Naive thymus-derived CD4-positive, alpha-beta T cell (primary cell): ENCODE measurements at regions of chr6 and their contacts with region 1.

Region 1: GRCh38 chr6:26285143-26286134 is 79.6 kb upstream of the BTN3A2 start:
- DNase-seq: peak; percentile 72 to 97 (median 92)
- ATAC-seq: peak; percentile 91
- H3K4me3 ChIP-seq: peak overlapping the region; percentile 88
- H3K4me3 Mint-ChIP-seq: peak overlapping the region; percentile 86 to 96 (median 90)
- H3K27ac ChIP-seq: peak overlapping the region; percentile 91
- H3K27ac Mint-ChIP-seq: peak overlapping the region; percentile 91 to 100 (median 98)
- H3K4me1 ChIP-seq: peaks cover 0 to 8% of the 10 kb centered on the region in 2 donors
- H3K4me1 Mint-ChIP-seq: peaks cover 7 to 48% (median 33%) of the 10 kb centered on the region in 7 donors
- H3K27me3 ChIP-seq: no peaks in the 10 kb centered on the region
- H3K27me3 Mint-ChIP-seq: peaks cover 0 to 9% (median 5%) of the 10 kb centered on the region in 5 donors

Region 2: GRCh38 chr6:26122793-26123674 is 162.4 kb before region 1 on chr6:
- CTCF ChIA-PET with region 1: interaction called, 4 read pairs
- POLR2A ChIA-PET with region 1: interaction called, 52 read pairs
- intact Hi-C with region 1: loop called in 1 of 2 experiments (anchors 1 kb)
- DNase-seq: peak; percentile 68 to 99 (median 96)
- ATAC-seq: peak; percentile 78
- H3K4me3 ChIP-seq: peak overlapping the region; percentile 94
- H3K4me3 Mint-ChIP-seq: peak overlapping the region; percentile 92 to 100 (median 98)
- H3K27ac ChIP-seq: peak overlapping the region; percentile 86
- H3K27ac Mint-ChIP-seq: peak overlapping the region; percentile 97 to 100 (median 99)
- H3K4me1 ChIP-seq: peaks cover 18 to 23% of the 10 kb centered on the region in 2 donors
- H3K4me1 Mint-ChIP-seq: peaks cover 22 to 54% (median 30%) of the 10 kb centered on the region in 7 donors
- H3K27me3 ChIP-seq: no peaks in the 10 kb centered on the region
- H3K27me3 Mint-ChIP-seq: peaks cover 0 to 21% (median 0%) of the 10 kb centered on the region in 5 donors

Region 3: GRCh38 chr6:26216356-26216885 is 69.0 kb before region 1 on chr6:
- CTCF ChIA-PET with region 1: no interaction called
- POLR2A ChIA-PET with region 1: interaction called, 112 read pairs
- intact Hi-C with region 1: loop called (anchors 1 to 2 kb)
- DNase-seq: peak; percentile 56 to 97 (median 93)
- ATAC-seq: peak; percentile 86
- H3K4me3 ChIP-seq: peak overlapping the region; percentile 72
- H3K4me3 Mint-ChIP-seq: no peak overlapping the region
- H3K27ac ChIP-seq: peak overlapping the region; percentile 84
- H3K27ac Mint-ChIP-seq: no peak overlapping the region
- H3K4me1 ChIP-seq: peaks cover 12 to 18% of the 10 kb centered on the region in 2 donors
- H3K4me1 Mint-ChIP-seq: peaks cover 3 to 31% (median 10%) of the 10 kb centered on the region in 7 donors
- H3K27me3 ChIP-seq: no peaks in the 10 kb centered on the region
- H3K27me3 Mint-ChIP-seq: no peaks in the 10 kb centered on the region

Region 4: GRCh38 chr6:26270903-26271667 is 14.4 kb before region 1 on chr6:
- CTCF ChIA-PET with region 1: interaction called, 17 read pairs
- POLR2A ChIA-PET with region 1: interaction called, 362 read pairs
- intact Hi-C with region 1: loop called (anchors 1 kb)
- DNase-seq: peak; percentile 50 to 89 (median 85)
- ATAC-seq: peak; percentile 24
- H3K4me3 ChIP-seq: peak overlapping the region; percentile 83
- H3K4me3 Mint-ChIP-seq: no peak overlapping the region
- H3K27ac ChIP-seq: peak overlapping the region; percentile 82
- H3K27ac Mint-ChIP-seq: peak overlapping the region in 2 of 9 donors; percentile 10 to 91
- H3K4me1 ChIP-seq: peaks cover 6 to 27% of the 10 kb centered on the region in 2 donors
- H3K4me1 Mint-ChIP-seq: peaks cover 0 to 34% (median 15%) of the 10 kb centered on the region in 7 donors
- H3K27me3 ChIP-seq: no peaks in the 10 kb centered on the region
- H3K27me3 Mint-ChIP-seq: no peaks in the 10 kb centered on the region

Region 5: GRCh38 chr6:26363882-26364701 is 78.7 kb after region 1 on chr6:
- CTCF ChIA-PET with region 1: no interaction called
- POLR2A ChIA-PET with region 1: no interaction called
- intact Hi-C with region 1: loop called in 1 of 2 experiments (anchors 1 kb)
- DNase-seq: peak in 7 of 9 donors; percentile 22 to 51 (median 45)
- ATAC-seq: peak; percentile 24
- H3K4me3 ChIP-seq: peak overlapping the region; percentile 89
- H3K4me3 Mint-ChIP-seq: no peak overlapping the region
- H3K27ac ChIP-seq: peak overlapping the region; percentile 92
- H3K27ac Mint-ChIP-seq: no peak overlapping the region
- H3K4me1 ChIP-seq: peaks cover 32 to 37% of the 10 kb centered on the region in 2 donors
- H3K4me1 Mint-ChIP-seq: peaks cover 43 to 67% (median 56%) of the 10 kb centered on the region in 7 donors
- H3K27me3 ChIP-seq: no peaks in the 10 kb centered on the region
- H3K27me3 Mint-ChIP-seq: no peaks in the 10 kb centered on the region

Region 6: DNA sequence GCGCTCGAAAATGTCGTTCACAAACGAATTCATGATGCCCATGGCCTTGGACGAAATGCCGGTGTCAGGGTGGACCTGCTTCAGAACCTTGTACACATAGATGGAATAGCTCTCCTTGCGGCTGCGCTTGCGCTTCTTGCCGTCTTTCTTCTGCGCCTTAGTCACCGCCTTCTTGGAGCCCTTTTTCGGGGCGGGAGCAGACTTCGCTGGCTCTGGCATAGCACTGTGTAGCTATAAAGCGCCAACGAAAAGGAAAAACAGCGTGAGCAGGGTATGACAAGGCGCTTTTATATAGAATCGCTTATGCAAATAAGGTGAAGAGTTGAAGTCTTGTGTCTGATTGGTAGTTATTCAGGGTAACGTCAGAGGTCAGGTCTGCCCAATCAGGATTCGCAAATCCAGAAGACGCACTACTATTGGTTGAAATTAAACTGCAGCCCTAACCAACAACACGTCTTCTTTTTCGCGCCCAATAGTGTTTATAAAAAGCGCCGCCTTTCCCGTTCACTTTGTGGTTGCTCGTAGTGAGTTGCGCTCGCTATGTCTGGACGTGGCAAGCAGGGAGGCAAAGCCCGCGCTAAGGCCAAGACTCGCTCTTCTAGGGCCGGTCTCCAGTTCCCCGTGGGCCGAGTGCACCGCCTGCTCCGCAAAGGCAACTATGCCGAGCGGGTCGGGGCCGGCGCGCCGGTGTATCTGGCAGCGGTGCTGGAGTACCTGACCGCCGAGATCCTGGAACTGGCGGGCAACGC is 847.3 kb after region 1 on chr6:
- CTCF ChIA-PET with region 1: no interaction called
- POLR2A ChIA-PET with region 1: interaction called, 14 read pairs
- intact Hi-C with region 1: loop called (anchors 1 to 2 kb)
- DNase-seq: peak; percentile 73 to 99 (median 97)
- ATAC-seq: peak; percentile 93
- H3K4me3 ChIP-seq: peak overlapping the region; percentile 90
- H3K4me3 Mint-ChIP-seq: no peak overlapping the region
- H3K27ac ChIP-seq: peak overlapping the region; percentile 81
- H3K27ac Mint-ChIP-seq: no peak overlapping the region
- H3K4me1 ChIP-seq: peaks cover 10 to 18% of the 10 kb centered on the region in 2 donors
- H3K4me1 Mint-ChIP-seq: peaks cover 6 to 49% (median 21%) of the 10 kb centered on the region in 7 donors
- H3K27me3 ChIP-seq: no peaks in the 10 kb centered on the region
- H3K27me3 Mint-ChIP-seq: no peaks in the 10 kb centered on the region